T47D (cell line): ENCODE measurements at regions of chr1 and their contacts with region 1.

Region 1: DNA sequence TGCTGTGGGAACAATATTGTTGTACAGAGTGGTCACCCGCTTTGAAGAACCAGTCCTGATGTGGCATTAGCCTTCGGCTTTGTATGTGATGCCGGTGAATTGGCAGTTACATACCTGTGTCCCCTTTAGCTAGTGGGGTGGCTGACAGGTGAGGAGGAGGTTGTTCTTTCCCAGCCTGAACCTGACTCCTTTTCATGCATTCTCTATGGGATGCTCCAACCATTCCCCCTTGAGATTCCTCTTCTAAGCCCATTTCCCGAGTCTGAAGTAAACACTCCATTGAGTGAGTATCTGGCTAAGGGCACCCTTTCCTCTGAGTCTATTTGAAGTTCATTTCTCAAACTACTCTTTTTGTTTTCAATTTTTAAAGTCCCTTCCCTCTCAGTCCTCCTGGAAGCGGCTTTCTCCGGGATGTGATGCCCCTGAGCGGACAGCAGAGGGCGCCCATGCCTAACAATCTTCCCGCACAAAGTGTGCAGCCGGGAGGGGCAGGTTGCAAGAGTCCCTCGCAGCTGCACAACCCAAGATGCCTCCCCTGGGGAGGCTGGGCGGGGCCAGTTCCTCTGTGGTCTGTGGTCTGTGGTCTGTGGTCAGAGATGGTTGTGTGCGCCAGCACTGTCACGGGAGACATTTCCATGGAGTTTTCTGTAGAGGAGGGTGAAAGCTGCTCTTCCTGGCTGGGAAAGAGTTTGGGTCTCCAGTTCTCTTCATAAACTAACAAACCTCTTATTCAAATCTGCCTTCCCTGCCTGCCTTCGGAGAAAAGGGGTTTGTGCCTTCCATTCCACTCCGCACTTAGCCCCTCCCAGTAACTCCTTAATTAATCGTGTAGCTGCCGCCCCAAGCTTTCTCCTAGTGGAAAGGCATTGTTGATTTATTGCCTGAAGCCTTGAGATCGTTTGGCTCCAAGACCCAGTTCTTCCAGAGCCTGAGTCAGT is 36.4 kb upstream of the LMX1A start:
- DNase-seq: peak; percentile 74 to 79

Region 2: GRCh38 chr1:165597883-165598675 is 205.2 kb after region 1 on chr1:
- in situ Hi-C with region 1: loop called (anchors 25 kb)
- DNase-seq: peak; percentile 89 to 97

Region 3: GRCh38 chr1:166032572-166033371 is 639.9 kb after region 1 on chr1:
- in situ Hi-C with region 1: no loop called
- DNase-seq: peak in 1 of 2 experiments; percentile 9